Heart right ventricle (tissue), 16 donors: ENCODE measurements at regions of chr3 and their contacts with region 1.

Region 1: GRCh38 chr3:185733980-185734724 is 90.7 kb downstream of the IGF2BP2 start:
- DNase-seq: peak in 1 of 2 donors; percentile 36
- ATAC-seq: peak in 6 of 8 donors; percentile 31 to 70 (median 56)
- H3K4me3 ChIP-seq: no peak overlapping the region
- H3K27ac ChIP-seq: no peak overlapping the region
- H3K4me1 ChIP-seq: peaks cover 0 to 22% (median 0%) of the 10 kb centered on the region in 9 donors
- H3K27me3 ChIP-seq: no peaks in the 10 kb centered on the region
- CTCF ChIP-seq: peak in 8 of 9 donors; percentile 24 to 58 (median 52)

Region 2: DNA sequence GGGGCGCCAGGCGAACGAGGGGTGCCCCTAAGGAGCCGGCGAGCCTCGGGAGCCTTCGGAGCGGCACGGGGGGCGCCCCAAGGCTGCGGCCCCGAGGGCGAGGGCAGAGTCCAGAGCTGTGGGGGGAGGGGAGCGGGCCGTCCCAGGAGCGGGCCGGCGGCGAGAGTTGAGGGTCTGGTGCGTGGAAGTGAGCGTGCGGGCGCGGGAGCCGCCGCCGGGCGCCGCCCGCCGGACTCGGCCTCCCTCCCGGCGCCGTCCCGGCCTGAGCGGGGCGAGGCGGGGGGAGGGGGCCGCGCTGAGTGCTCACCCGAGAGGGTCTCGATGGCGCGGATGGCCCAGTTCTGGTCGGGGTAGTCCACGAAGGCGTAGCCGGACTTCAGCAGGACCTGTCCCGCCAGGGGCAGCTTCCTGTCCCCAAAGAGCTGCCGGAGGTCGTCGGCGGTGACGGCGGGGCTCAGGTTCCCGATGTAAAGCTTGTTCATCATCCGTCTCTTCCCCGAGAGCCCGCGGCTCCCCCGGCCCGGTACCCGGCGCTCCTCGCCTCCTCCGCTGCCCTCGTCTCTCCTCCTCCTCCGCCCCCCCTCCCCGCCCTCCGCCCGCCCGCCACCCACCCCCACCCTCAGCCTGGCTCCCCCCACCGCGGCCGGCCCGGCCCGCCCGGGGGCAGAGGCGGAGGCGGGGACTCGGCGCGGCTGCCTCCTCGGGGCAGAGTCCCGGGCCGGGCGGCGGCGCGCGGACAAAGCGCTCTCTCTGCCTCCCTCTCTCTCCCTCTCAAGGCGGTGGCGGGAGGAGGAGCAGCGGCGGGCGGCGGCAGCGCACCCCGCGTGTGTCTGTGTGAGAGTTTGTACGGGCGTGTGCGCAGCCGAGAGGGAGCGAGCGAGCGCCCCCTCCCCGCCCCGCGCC is 90.6 kb after region 1 on chr3 and contains the start of gene IGF2BP2:
- intact Hi-C with region 1: loop called in 1 of 10 experiments (anchors 10 kb)
- DNase-seq: peak; percentile 49 to 73
- ATAC-seq: peak; percentile 64 to 84 (median 78)
- H3K4me3 ChIP-seq: peak within 1 kb of the TSS; percentile 58 to 83 (median 74)
- H3K27ac ChIP-seq: peak within 1 kb of the TSS in 9 of 10 donors; percentile 33 to 77 (median 71)
- H3K4me1 ChIP-seq: peaks cover 2 to 27% (median 16%) of the 10 kb centered on the region in 9 donors
- H3K27me3 ChIP-seq: peaks cover 0 to 63% (median 41%) of the 10 kb centered on the region in 7 donors
- CTCF ChIP-seq: peak in 1 of 9 donors; percentile 20
- total RNA-seq, gene IGF2BP2: 13.0 to 17.8 (median 15.7) TPM

Region 3: GRCh38 chr3:185912929-185913901 is 179.1 kb after region 1 on chr3:
- intact Hi-C with region 1: loop called in 1 of 10 experiments (anchors 10 kb)
- DNase-seq: no peak
- ATAC-seq: peak in 2 of 8 donors; percentile 25 to 27
- H3K4me3 ChIP-seq: no peak overlapping the region
- H3K27ac ChIP-seq: no peak overlapping the region
- H3K4me1 ChIP-seq: peaks cover 0 to 5% (median 0%) of the 10 kb centered on the region in 9 donors
- H3K27me3 ChIP-seq: no peaks in the 10 kb centered on the region
- CTCF ChIP-seq: no peak

Region 4: GRCh38 chr3:185929192-185930151 is 195.3 kb after region 1 on chr3:
- intact Hi-C with region 1: loop called in 2 of 10 experiments (anchors 10 kb)
- DNase-seq: no peak
- ATAC-seq: peak in 2 of 8 donors; percentile 35 to 55
- H3K4me3 ChIP-seq: peak overlapping the region in 5 of 10 donors; percentile 1 to 100 (median 21)
- H3K27ac ChIP-seq: peak overlapping the region in 5 of 10 donors; percentile 16 to 56 (median 22)
- H3K4me1 ChIP-seq: peaks cover 37 to 100% (median 98%) of the 10 kb centered on the region in 9 donors
- H3K27me3 ChIP-seq: no peaks in the 10 kb centered on the region
- CTCF ChIP-seq: no peak

Region 5: DNA sequence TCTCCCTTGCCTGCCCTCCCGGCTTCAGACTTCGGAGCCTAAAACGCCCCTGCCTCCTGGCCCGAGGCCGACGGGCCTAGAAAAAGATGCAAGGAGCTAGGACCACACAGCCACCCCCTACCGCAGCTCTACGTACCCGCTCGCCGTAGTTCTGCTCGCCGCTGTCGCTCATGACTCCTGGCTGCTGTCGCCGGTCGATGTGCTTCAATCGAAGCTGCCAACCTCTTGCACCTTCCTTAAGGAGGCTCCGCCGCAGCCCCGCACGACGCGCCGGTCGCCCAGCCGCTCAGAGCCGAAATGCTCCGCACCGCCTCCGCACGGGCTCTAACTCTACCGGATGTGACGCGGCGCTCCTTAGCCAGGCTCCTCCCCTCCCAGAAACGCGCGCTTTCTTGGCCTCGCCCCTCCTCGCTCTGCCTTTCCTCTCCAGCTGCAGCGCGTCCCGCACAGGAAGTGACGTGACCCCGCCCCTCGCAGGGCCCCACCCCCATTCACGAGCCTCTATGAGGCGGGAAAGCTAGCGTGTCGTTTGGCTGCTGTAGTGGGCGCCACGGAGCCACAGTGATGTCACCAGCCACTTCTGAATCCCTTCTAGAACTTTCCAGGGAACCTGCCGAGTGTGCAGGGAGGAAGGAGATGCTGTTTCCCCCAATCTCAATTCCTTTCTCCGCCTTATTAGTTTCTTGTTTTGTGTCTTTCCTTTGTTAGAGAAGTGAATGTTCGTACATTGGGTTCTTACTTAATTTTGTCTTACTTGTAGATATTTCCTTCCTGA is 203.7 kb after region 1 on chr3 and contains the start of gene TRA2B:
- intact Hi-C with region 1: loop called in 3 of 10 experiments (anchors 10 kb)
- DNase-seq: peak; percentile 99
- ATAC-seq: peak; percentile 98 to 99 (median 99)
- H3K4me3 ChIP-seq: peak within 1 kb of the TSS; percentile 80 to 100 (median 94)
- H3K27ac ChIP-seq: peak within 1 kb of the TSS; percentile 98 to 100 (median 100)
- H3K4me1 ChIP-seq: peaks cover 0 to 39% (median 30%) of the 10 kb centered on the region in 9 donors
- H3K27me3 ChIP-seq: no peaks in the 10 kb centered on the region
- CTCF ChIP-seq: peak in 8 of 9 donors; percentile 12 to 66 (median 40)
- total RNA-seq, gene TRA2B: 46.3 to 75.9 (median 52.1) TPM

Region 6: GRCh38 chr3:185942907-185943759 is 209.0 kb after region 1 on chr3:
- intact Hi-C with region 1: loop called in 3 of 10 experiments (anchors 10 kb)
- DNase-seq: peak; percentile 74 to 79
- ATAC-seq: peak; percentile 65 to 91 (median 80)
- H3K4me3 ChIP-seq: peak overlapping the region in 6 of 10 donors; percentile 20 to 45 (median 30)
- H3K27ac ChIP-seq: peak overlapping the region in 2 of 10 donors; percentile 26
- H3K4me1 ChIP-seq: peaks cover 0 to 14% (median 10%) of the 10 kb centered on the region in 9 donors
- H3K27me3 ChIP-seq: peaks cover 0 to 9% (median 0%) of the 10 kb centered on the region in 7 donors
- CTCF ChIP-seq: peak in 8 of 9 donors; percentile 93 to 99 (median 98)